ENCODE measurements at regions of chr2 and their contacts with region 1.

Region 1: DNA sequence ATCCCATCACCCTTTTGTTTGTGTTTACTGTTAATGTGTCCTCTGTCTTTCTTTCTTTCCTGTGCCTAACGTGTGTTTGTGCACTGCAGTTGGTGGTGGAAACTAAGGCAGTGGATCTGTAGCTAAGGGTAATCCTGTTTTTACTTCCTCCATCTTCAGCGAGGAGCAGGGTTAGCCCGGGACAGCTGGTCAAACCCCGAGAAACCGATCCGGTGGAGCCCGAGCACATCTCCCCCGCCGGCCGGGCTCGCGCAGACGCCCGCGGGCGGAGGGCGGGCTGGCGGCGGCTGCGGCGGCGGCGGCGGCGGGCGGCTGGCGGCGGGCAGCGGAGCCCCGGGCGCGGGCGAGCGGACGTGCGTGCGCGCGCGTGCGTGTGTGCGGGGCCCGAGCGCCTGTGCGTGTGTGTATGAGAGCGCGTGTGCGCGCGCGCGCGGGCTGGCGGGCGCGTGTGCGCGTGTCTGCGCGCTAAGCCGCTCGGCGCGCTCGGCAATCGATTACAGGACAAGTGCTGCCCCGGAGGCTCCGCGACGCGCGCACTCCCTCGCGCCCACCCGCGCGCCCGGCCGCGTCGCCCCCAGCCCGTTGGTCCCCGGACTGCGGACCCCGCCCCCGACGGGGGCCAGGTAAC is at the start of gene IKZF2:
- DNase-seq: peak; percentile 85
- H3K4me3 ChIP-seq: peak within 1 kb of the TSS; percentile 84
- H3K27ac ChIP-seq: peak within 1 kb of the TSS; percentile 95
- H3K4me1 ChIP-seq: peaks cover 53% of the 10 kb centered on the region
- H3K27me3 ChIP-seq: no peaks in the 10 kb centered on the region
- CTCF ChIP-seq: no peak
- total RNA-seq, gene IKZF2: 6.8 TPM

Region 2: GRCh38 chr2:212686285-212686895 is 465.2 kb before region 1 on chr2:
- intact Hi-C with region 1: loop called (anchors 10 kb)
- DNase-seq: peak; percentile 33
- H3K4me3 ChIP-seq: no peak overlapping the region
- H3K27ac ChIP-seq: no peak overlapping the region
- H3K4me1 ChIP-seq: no peaks in the 10 kb centered on the region
- H3K27me3 ChIP-seq: peaks cover 2% of the 10 kb centered on the region
- CTCF ChIP-seq: peak; percentile 88

Region 3: DNA sequence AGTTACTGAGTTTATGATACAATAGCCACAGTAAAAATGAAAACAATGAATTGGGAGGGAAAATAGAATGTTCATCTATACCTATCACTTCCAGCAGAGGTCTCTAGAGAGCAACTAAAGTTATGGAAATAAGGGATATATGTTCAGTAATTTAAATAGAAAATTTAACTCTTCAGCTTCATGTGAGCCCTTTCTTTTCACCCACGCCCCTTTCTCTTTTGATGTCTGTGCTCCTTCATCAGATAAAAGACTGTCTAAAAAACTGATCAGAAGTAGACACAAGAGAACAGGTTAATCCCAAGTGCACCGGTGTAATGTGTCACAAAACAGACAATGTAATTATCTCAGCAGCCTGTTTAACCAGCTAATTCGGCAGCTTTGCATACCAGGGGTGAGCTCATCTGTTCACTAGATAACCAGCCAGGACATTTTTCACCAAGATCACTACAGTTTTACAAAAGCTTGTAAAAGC is 374.5 kb before region 1 on chr2:
- intact Hi-C with region 1: loop called (anchors 2 kb)
- DNase-seq: no peak
- H3K4me3 ChIP-seq: no peak overlapping the region
- H3K27ac ChIP-seq: no peak overlapping the region
- H3K4me1 ChIP-seq: no peaks in the 10 kb centered on the region
- H3K27me3 ChIP-seq: no peaks in the 10 kb centered on the region
- CTCF ChIP-seq: peak; percentile 75

Measured in left ventricle myocardium inferior (tissue), 1 donor.